ENCODE measurements at regions of chr2 and their contacts with region 1.

Region 1: GRCh38 chr2:7427293-7428060 is 510.3 kb downstream of the RNF144A start:
- DNase-seq: peak in 4 of 5 donors; percentile 57 to 69 (median 64)
- H3K4me3 ChIP-seq: no peak overlapping the region
- H3K4me3 Mint-ChIP-seq: peak overlapping the region in 4 of 8 donors; percentile 4 to 49 (median 30)
- H3K27ac ChIP-seq: no peak overlapping the region
- H3K27ac Mint-ChIP-seq: peak overlapping the region in 5 of 7 donors; percentile 8 to 52 (median 16)
- H3K4me1 ChIP-seq: peaks cover 9% of the 10 kb centered on the region
- H3K4me1 Mint-ChIP-seq: peaks cover 19 to 46% (median 32%) of the 10 kb centered on the region in 4 donors
- H3K27me3 ChIP-seq: no peaks in the 10 kb centered on the region
- H3K27me3 Mint-ChIP-seq: peaks cover 1 to 2% of the 10 kb centered on the region in 2 donors

Region 2: DNA sequence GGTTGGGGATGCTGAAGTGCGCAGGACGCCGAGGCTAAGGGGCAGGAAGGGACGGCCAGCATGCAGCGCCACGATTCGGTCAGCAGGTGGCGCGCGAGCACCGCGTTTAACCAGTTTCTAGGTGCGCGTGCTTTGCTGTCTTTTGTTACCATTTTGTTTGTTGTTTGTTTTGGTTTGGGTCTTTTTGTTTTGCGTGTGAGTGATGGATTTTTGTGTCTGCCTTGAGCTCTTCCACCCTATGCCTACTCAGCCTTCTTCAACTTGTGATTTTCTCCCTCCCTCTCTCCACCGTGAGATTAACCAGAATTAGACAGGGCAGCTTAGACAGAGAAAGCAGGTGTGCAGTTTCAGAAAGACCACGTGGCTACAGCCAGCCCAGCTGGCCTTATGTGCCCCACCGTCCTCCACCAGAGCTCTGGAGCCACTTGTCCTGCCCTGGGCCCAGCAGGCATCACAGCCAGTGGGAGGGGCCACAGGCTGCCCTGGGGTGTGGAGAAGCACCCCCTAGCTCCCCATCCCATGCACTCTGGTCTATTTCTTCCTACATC is 330.1 kb before region 1 on chr2:
- CTCF ChIA-PET with region 1: interaction called, 4 read pairs
- POLR2A ChIA-PET with region 1: no interaction called
- intact Hi-C with region 1: loop called (anchors 1 kb)
- DNase-seq: peak; percentile 65 to 72 (median 66)
- H3K4me3 ChIP-seq: peak overlapping the region in 1 of 2 donors; percentile 24
- H3K4me3 Mint-ChIP-seq: peak overlapping the region; percentile 69 to 87 (median 77)
- H3K27ac ChIP-seq: no peak overlapping the region
- H3K27ac Mint-ChIP-seq: peak overlapping the region in 5 of 7 donors; percentile 9 to 64 (median 26)
- H3K4me1 ChIP-seq: peaks cover 9% of the 10 kb centered on the region
- H3K4me1 Mint-ChIP-seq: peaks cover 3 to 9% (median 5%) of the 10 kb centered on the region in 4 donors
- H3K27me3 ChIP-seq: no peaks in the 10 kb centered on the region
- H3K27me3 Mint-ChIP-seq: peaks cover 0 to 1% of the 10 kb centered on the region in 2 donors

Region 3: DNA sequence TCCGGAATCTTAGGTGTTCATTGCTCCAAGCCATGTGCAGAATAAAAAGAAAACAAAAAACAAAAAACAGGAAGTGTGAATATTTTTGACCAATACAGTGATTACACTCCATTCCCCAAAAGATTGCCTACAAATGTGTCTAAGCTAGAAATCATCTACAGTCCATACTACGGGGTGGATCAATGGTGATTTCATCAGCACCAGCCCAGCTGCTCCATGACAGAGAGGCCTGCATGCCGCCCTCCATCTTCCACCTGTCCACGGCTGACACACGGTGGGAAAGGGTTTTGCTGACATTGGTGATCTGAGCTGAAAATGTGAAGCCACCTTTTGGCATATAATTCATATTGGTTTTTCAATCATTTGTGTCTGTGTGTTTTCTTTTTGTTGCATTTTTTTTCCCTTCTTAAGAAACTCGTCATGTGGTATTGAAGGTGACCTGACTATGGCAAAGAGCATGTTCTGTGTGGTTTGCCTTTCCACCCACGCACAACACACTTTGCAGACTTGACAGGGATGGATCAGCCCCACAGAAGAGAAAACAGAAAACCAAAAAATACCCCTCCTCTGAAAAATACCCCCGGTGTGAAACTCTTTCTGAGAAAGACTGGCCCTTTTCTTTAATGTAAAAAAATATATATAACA is 22.8 kb after region 1 on chr2:
- CTCF ChIA-PET with region 1: interaction called, 8 read pairs
- POLR2A ChIA-PET with region 1: no interaction called
- intact Hi-C with region 1: loop called (anchors 2 kb)
- DNase-seq: peak; percentile 54 to 72 (median 59)
- H3K4me3 ChIP-seq: no peak overlapping the region
- H3K4me3 Mint-ChIP-seq: peak overlapping the region in 7 of 8 donors; percentile 60 to 83 (median 67)
- H3K27ac ChIP-seq: no peak overlapping the region
- H3K27ac Mint-ChIP-seq: peak overlapping the region; percentile 85 to 95 (median 93)
- H3K4me1 ChIP-seq: peaks cover 60% of the 10 kb centered on the region
- H3K4me1 Mint-ChIP-seq: peaks cover 44 to 66% (median 57%) of the 10 kb centered on the region in 4 donors
- H3K27me3 ChIP-seq: no peaks in the 10 kb centered on the region
- H3K27me3 Mint-ChIP-seq: no peaks in the 10 kb centered on the region

Region 4: GRCh38 chr2:7672027-7672684 is 244.7 kb after region 1 on chr2:
- CTCF ChIA-PET with region 1: interaction called, 34 read pairs
- POLR2A ChIA-PET with region 1: no interaction called
- intact Hi-C with region 1: loop called (anchors 1 kb)
- DNase-seq: peak in 4 of 5 donors; percentile 37 to 43 (median 43)
- H3K4me3 ChIP-seq: no peak overlapping the region
- H3K4me3 Mint-ChIP-seq: peak overlapping the region; percentile 3 to 82 (median 68)
- H3K27ac ChIP-seq: no peak overlapping the region
- H3K27ac Mint-ChIP-seq: peak overlapping the region; percentile 75 to 93 (median 89)
- H3K4me1 ChIP-seq: peaks cover 19% of the 10 kb centered on the region
- H3K4me1 Mint-ChIP-seq: peaks cover 19 to 36% (median 25%) of the 10 kb centered on the region in 4 donors
- H3K27me3 ChIP-seq: no peaks in the 10 kb centered on the region
- H3K27me3 Mint-ChIP-seq: no peaks in the 10 kb centered on the region

Region 5: GRCh38 chr2:7730449-7730848 is 303.0 kb after region 1 on chr2:
- CTCF ChIA-PET with region 1: interaction called, 28 read pairs
- POLR2A ChIA-PET with region 1: interaction called, 19 read pairs
- intact Hi-C with region 1: loop called (anchors 1 kb)
- DNase-seq: peak in 1 of 5 donors; percentile 38
- H3K4me3 ChIP-seq: peak overlapping the region in 1 of 2 donors; percentile 33
- H3K4me3 Mint-ChIP-seq: peak overlapping the region; percentile 80 to 96 (median 88)
- H3K27ac ChIP-seq: peak overlapping the region; percentile 42
- H3K27ac Mint-ChIP-seq: peak overlapping the region; percentile 68 to 97 (median 94)
- H3K4me1 ChIP-seq: peaks cover 38% of the 10 kb centered on the region
- H3K4me1 Mint-ChIP-seq: peaks cover 35 to 80% (median 54%) of the 10 kb centered on the region in 4 donors
- H3K27me3 ChIP-seq: no peaks in the 10 kb centered on the region
- H3K27me3 Mint-ChIP-seq: no peaks in the 10 kb centered on the region

Region 6: GRCh38 chr2:8544786-8545694 is 1117.6 kb after region 1 on chr2:
- CTCF ChIA-PET with region 1: interaction called, 5 read pairs
- POLR2A ChIA-PET with region 1: no interaction called
- intact Hi-C with region 1: loop called (anchors 2 kb)
- DNase-seq: peak; percentile 61 to 90 (median 70)
- H3K4me3 ChIP-seq: no peak overlapping the region
- H3K4me3 Mint-ChIP-seq: peak overlapping the region; percentile 35 to 85 (median 62)
- H3K27ac ChIP-seq: peak overlapping the region; percentile 69
- H3K27ac Mint-ChIP-seq: peak overlapping the region; percentile 76 to 97 (median 94)
- H3K4me1 ChIP-seq: peaks cover 73% of the 10 kb centered on the region
- H3K4me1 Mint-ChIP-seq: peaks cover 48 to 84% (median 61%) of the 10 kb centered on the region in 4 donors
- H3K27me3 ChIP-seq: no peaks in the 10 kb centered on the region
- H3K27me3 Mint-ChIP-seq: no peaks in the 10 kb centered on the region